B cell (primary cell): ENCODE measurements at regions of chr20 and their contacts with region 1.

Region 1: GRCh38 chr20:63864847-63865640 is at the start of gene TPD52L2:
- DNase-seq: peak; percentile 98
- ATAC-seq: peak; percentile 82
- H3K4me3 ChIP-seq: peak within 1 kb of the TSS; percentile 69 to 97 (median 86)
- H3K4me3 Mint-ChIP-seq: peak within 1 kb of the TSS; percentile 94
- H3K27ac ChIP-seq: peak within 1 kb of the TSS; percentile 89 to 90
- H3K27ac Mint-ChIP-seq: peak within 1 kb of the TSS; percentile 97
- H3K4me1 ChIP-seq: peaks cover 16 to 20% of the 10 kb centered on the region in 2 donors
- H3K4me1 Mint-ChIP-seq: peaks cover 23% of the 10 kb centered on the region
- H3K27me3 ChIP-seq: no peaks in the 10 kb centered on the region
- H3K27me3 Mint-ChIP-seq: no peaks in the 10 kb centered on the region
- CTCF ChIP-seq: no peak
- total RNA-seq, gene TPD52L2: 41.1 and 41.3 TPM in 2 replicates

Region 2: DNA sequence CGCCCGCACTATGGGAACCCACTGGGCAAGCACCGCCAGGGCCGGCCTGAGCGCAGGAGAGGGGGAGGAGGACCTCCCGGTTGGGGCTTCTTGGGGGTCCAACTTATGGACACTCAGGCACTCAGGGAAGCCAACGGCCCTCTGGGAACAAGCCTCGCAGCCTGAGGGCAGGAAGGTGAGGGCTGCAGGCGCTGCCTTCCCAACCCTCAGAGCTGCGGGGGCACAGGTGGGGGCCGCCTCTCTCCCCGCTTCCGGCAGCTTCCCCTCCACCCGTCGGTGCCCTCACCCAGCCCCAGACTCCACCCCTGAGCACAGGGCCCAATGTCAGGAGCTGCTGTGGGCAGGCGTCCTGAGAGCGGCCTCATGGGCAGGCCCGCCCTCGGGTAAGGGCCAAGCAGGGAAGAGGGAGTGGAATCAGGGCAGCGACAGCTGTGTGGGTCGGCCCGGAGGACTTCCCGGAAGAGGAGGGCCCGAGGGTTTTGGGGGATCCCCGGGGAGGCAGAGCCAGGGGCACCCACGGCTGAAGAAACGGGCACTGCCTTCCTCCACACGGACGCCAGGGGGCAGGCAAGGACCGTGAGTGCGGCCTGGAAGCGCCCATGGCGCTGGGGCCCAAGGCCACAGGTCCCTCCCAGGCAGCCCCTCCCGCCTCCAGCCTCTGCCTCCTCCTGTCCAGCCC is 327.4 kb before region 1 on chr20:
- CTCF ChIA-PET with region 1: interaction called, 29 read pairs
- POLR2A ChIA-PET with region 1: interaction called, 16 read pairs
- intact Hi-C with region 1: no loop called
- DNase-seq: peak; percentile 97
- ATAC-seq: peak; percentile 85
- H3K4me3 ChIP-seq: peak overlapping the region in 4 of 5 experiments; percentile 55 to 67 (median 58)
- H3K4me3 Mint-ChIP-seq: peak overlapping the region; percentile 86
- H3K27ac ChIP-seq: peak overlapping the region; percentile 83 to 86
- H3K27ac Mint-ChIP-seq: peak overlapping the region; percentile 92
- H3K4me1 ChIP-seq: peaks cover 30 to 45% of the 10 kb centered on the region in 2 donors
- H3K4me1 Mint-ChIP-seq: peaks cover 34% of the 10 kb centered on the region
- H3K27me3 ChIP-seq: no peaks in the 10 kb centered on the region
- H3K27me3 Mint-ChIP-seq: no peaks in the 10 kb centered on the region
- CTCF ChIP-seq: peak; percentile 99

Region 3: DNA sequence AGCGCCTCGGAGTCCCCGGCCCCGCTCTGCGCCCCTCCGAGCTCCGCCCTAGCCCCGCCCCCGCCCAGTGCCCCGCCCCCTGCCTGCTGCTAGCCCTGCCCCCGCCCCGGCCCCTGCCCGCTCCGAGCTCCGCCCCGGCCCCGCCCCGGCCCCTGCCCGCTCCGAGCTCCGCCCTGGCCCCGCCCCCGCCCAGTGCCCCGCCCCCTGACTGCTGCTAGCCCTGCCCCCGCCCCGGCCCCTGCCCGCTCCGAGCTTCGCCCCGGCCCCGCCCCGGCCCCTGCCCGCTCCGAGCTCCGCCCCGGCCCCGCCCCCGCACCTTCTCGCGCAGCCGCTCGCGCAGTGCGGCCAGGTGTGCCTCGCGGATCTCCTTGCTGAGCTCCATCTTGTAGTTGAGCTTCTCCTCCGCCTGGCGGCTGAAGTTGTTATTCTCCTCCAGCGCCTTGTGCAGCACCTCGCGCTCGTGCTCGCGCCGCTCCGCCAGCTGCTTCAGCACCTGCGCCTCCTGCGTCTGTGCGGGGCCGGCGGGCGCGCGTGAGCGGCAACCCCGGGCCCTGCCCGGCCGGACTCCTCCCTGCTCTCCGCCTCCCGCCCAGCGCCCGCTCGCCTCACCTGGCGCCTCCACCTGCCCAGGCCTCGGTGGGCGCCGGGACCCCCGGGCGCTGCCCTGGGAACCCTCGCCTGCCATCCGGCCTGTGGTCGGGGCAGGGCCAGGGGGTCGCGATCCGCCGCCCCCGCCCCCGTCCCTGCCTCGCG is 223.1 kb before region 1 on chr20:
- CTCF ChIA-PET with region 1: interaction called, 7 read pairs
- POLR2A ChIA-PET with region 1: interaction called, 3 read pairs
- intact Hi-C with region 1: loop called (anchors 1 kb)
- DNase-seq: peak; percentile 96
- ATAC-seq: peak; percentile 72
- H3K4me3 ChIP-seq: peak overlapping the region in 4 of 5 experiments; percentile 84 to 97 (median 90)
- H3K4me3 Mint-ChIP-seq: peak overlapping the region; percentile 82
- H3K27ac ChIP-seq: peak overlapping the region; percentile 91
- H3K27ac Mint-ChIP-seq: peak overlapping the region; percentile 97
- H3K4me1 ChIP-seq: peaks cover 23 to 41% of the 10 kb centered on the region in 2 donors
- H3K4me1 Mint-ChIP-seq: peaks cover 28% of the 10 kb centered on the region
- H3K27me3 ChIP-seq: no peaks in the 10 kb centered on the region
- H3K27me3 Mint-ChIP-seq: peaks cover 4% of the 10 kb centered on the region
- CTCF ChIP-seq: peak; percentile 67

Region 4: GRCh38 chr20:63739130-63740069 is 125.6 kb before region 1 on chr20 and contains the start of gene SLC2A4RG:
- CTCF ChIA-PET with region 1: interaction called, 3 read pairs
- POLR2A ChIA-PET with region 1: interaction called, 3 read pairs
- intact Hi-C with region 1: loop called (anchors 1 kb)
- DNase-seq: peak; percentile 79
- ATAC-seq: peak; percentile 71
- H3K4me3 ChIP-seq: peak within 1 kb of the TSS; percentile 23 to 64 (median 50)
- H3K4me3 Mint-ChIP-seq: peak within 1 kb of the TSS; percentile 80
- H3K27ac ChIP-seq: no peak within 1 kb of the TSS
- H3K27ac Mint-ChIP-seq: no peak within 1 kb of the TSS
- H3K4me1 ChIP-seq: peaks cover 35 to 46% of the 10 kb centered on the region in 2 donors
- H3K4me1 Mint-ChIP-seq: peaks cover 18% of the 10 kb centered on the region
- H3K27me3 ChIP-seq: no peaks in the 10 kb centered on the region
- H3K27me3 Mint-ChIP-seq: no peaks in the 10 kb centered on the region
- CTCF ChIP-seq: no peak
- total RNA-seq, gene SLC2A4RG: 49.4 and 50.8 TPM in 2 replicates

Region 5: DNA sequence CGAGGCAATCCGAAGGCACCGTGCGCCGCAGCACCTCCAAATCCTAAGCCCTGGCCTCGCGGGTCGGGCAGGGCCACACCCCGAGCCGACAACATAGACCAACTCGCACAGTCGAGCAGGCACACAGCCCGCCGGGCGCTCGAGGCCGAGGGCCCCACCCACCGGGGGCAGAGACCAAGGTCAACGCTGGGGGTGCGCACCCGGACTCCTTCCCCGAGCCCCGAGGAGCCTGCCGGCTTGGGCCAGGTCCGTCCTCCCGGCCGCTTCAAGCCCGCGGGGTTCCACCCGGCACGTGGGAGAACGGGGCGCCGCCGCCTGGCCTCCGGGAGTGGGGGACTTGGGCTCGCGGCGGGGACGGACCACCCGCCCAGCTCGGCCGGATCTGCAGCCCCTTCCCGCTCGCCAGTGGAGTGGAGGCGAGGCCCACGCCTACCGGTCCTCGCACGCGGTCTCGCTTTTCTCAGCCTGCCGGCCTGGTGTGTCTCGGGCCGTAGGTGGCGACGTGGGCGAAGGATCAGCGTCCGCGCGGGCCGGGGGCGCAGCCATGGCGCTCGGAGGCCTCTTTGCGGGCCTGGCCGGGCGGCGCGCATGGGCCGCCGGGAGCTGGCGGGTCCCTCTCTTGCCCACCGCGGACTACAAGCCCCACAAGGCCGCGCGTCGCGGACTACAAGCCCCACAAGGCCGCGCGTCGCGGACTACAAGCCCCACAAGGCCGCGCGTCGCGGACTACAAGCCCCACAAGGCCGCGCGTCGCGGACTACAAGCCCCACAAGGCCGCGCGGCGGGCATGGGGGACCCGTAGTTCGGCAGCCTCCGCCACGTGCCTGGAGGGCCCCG is 91.0 kb after region 1 on chr20 and contains the start of gene UCKL1:
- CTCF ChIA-PET with region 1: interaction called, 8 read pairs
- POLR2A ChIA-PET with region 1: interaction called, 9 read pairs
- intact Hi-C with region 1: loop called (anchors 1 kb)
- DNase-seq: peak; percentile 91
- ATAC-seq: peak; percentile 76
- H3K4me3 ChIP-seq: peak within 1 kb of the TSS; percentile 36 to 91 (median 84)
- H3K4me3 Mint-ChIP-seq: peak within 1 kb of the TSS; percentile 90
- H3K27ac ChIP-seq: peak within 1 kb of the TSS; percentile 57 to 85
- H3K27ac Mint-ChIP-seq: peak within 1 kb of the TSS; percentile 90
- H3K4me1 ChIP-seq: peaks cover 39 to 49% of the 10 kb centered on the region in 2 donors
- H3K4me1 Mint-ChIP-seq: peaks cover 37% of the 10 kb centered on the region
- H3K27me3 ChIP-seq: no peaks in the 10 kb centered on the region
- H3K27me3 Mint-ChIP-seq: no peaks in the 10 kb centered on the region
- CTCF ChIP-seq: no peak
- total RNA-seq, gene UCKL1: 104 and 106 TPM in 2 replicates

Region 6: GRCh38 chr20:64079273-64080012 is 214.4 kb after region 1 on chr20 and contains the start of gene RGS19:
- CTCF ChIA-PET with region 1: interaction called, 3 read pairs
- POLR2A ChIA-PET with region 1: no interaction called
- intact Hi-C with region 1: loop called (anchors 2 kb)
- DNase-seq: peak; percentile 95
- ATAC-seq: peak; percentile 46
- H3K4me3 ChIP-seq: peak within 1 kb of the TSS; percentile 80 to 98 (median 96)
- H3K4me3 Mint-ChIP-seq: peak within 1 kb of the TSS; percentile 87
- H3K27ac ChIP-seq: peak within 1 kb of the TSS; percentile 77 to 94
- H3K27ac Mint-ChIP-seq: peak within 1 kb of the TSS; percentile 93
- H3K4me1 ChIP-seq: peaks cover 46 to 75% of the 10 kb centered on the region in 2 donors
- H3K4me1 Mint-ChIP-seq: peaks cover 57% of the 10 kb centered on the region
- H3K27me3 ChIP-seq: peaks cover 0 to 3% (median under 1%) of the 10 kb centered on the region in 4 experiments
- H3K27me3 Mint-ChIP-seq: no peaks in the 10 kb centered on the region
- CTCF ChIP-seq: no peak
- total RNA-seq, gene RGS19: 69.4 TPM in 2 replicates